PC-9 (cell line): ENCODE measurements at regions of chr9 and their contacts with region 1.

Region 1: DNA sequence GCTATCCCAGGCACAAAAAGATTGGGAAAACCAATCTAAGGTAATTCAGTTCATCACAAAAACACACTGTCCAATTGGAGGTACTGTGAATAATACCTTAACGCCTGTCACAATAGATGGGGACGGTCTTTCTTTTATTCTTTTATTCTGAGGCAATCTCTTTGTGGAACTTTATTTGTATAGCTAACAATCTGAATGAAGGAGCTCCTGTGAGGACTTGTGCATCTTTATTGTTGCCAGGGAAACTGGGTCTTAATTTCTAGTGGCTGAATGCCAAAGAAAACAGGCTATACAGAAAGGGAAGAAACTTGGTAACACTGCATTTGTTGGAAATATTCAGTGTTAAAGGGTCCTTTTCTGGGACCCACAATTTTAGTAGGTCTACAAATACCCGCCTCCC is 546.9 kb upstream of the C9orf72 start:
- DNase-seq: no peak
- H3K4me3 ChIP-seq: no peak overlapping the region
- H3K27ac ChIP-seq: no peak overlapping the region
- H3K4me1 ChIP-seq: no peaks in the 10 kb centered on the region
- H3K27me3 ChIP-seq: no peaks in the 10 kb centered on the region
- CTCF ChIP-seq: no peak

Region 2: DNA sequence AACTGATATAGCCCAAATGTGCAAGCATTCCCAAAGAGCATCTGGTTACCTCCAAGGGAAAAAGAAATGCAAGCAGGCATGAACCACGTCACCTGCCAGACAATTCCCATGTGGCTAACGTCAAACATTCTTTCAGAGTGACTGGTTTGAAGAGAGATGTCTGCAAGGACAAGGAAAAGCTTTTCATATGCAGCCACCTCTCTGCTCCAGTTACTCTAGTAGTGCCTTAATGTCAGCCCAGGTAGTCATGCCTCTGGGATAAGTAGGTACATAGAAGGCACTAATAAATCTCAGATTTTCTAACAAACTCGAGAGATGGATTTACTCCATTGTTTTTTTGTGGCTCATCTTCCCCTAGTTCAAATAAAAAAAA is 692.9 kb before region 1 on chr9:
- CTCF ChIA-PET with region 1: no interaction called
- POLR2A ChIA-PET with region 1: no interaction called
- intact Hi-C with region 1: no loop called
- DNase-seq: peak; percentile 55 to 78
- H3K4me3 ChIP-seq: no peak overlapping the region
- H3K27ac ChIP-seq: peak overlapping the region; percentile 47
- H3K4me1 ChIP-seq: peaks cover 44% of the 10 kb centered on the region
- H3K27me3 ChIP-seq: no peaks in the 10 kb centered on the region
- CTCF ChIP-seq: no peak

Region 3: DNA sequence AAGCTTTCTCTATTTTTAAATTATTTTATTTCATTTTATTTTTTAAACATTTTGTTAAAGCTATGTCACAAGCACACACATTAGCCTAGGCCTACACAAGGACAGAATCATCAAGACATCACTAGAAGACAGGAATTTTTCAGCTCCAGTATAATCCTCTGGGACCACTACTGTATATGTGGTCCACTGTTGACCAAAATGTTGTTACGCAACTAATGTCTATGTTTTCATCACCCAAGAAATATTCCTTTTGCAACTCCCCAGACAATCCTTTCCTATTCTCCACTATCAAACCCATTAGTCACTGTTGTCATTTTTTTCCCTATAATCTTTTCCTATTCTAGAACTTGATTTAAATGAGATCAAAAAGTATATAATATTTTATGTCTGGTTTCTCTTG is 1824.8 kb after region 1 on chr9:
- CTCF ChIA-PET with region 1: no interaction called
- POLR2A ChIA-PET with region 1: interaction called, 10 read pairs
- intact Hi-C with region 1: no loop called
- DNase-seq: no peak
- H3K4me3 ChIP-seq: no peak overlapping the region
- H3K27ac ChIP-seq: no peak overlapping the region
- H3K4me1 ChIP-seq: no peaks in the 10 kb centered on the region
- H3K27me3 ChIP-seq: no peaks in the 10 kb centered on the region
- CTCF ChIP-seq: no peak